Activated B cell treated with CpG ODN at 0.5 μM for 24 hours (primary cell): ENCODE measurements at regions of chr3 and their contacts with region 1.

Region 1: DNA sequence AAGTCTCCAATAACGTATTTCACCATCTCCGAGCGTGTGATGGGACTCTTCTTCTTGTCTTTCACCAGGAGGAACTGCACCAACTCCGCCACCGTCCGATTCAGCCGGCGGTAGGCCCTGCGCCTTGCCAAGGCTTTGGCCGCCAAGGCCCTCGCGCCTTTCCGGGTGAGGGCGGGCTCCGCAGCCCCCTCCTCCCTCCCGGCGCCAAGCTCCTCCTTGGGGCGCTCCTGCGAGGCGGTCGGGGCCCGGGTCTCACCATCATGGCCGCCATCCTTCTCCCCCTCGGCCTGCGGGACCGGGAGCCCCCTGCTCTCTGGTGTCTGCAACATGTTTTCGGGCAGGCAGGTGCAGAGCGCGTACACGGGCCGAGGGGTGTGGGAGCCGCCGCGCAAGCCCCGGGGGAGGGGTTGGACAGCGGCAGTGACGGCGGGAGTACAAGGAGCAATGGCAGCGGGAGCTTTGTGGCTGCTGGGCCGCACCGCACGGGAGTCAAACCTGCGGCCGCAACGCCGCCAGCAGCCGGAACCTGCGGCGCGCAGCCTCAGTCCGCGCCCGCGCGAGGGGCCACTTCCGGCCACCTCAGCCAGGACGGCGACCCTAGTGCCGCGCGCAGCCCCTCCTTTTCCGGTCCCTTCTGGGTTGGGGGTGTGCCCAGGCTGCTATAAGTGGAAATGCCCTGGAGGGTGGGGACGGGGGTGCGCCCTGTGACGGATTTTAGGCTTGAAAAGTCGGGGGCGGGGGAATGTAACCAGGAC is at the start of gene MAGEF1:
- DNase-seq: peak; percentile 65
- ATAC-seq: peak; percentile 80
- H3K4me3 Mint-ChIP-seq: peak within 1 kb of the TSS; percentile 86
- H3K27ac Mint-ChIP-seq: peak within 1 kb of the TSS; percentile 87
- H3K4me1 Mint-ChIP-seq: peaks cover 30% of the 10 kb centered on the region
- H3K27me3 Mint-ChIP-seq: no peaks in the 10 kb centered on the region
- CTCF ChIP-seq: no peak
- total RNA-seq, gene MAGEF1: 18.5 and 18.7 TPM in 2 replicates

Region 2: GRCh38 chr3:184561061-184561912 is 150.4 kb before region 1 on chr3 and contains the start of gene EPHB3:
- CTCF ChIA-PET with region 1: interaction called, 5 read pairs
- POLR2A ChIA-PET with region 1: interaction called, 5 read pairs
- intact Hi-C with region 1: loop called (anchors 1 kb)
- DNase-seq: peak; percentile 89
- ATAC-seq: peak; percentile 93
- H3K4me3 Mint-ChIP-seq: peak within 1 kb of the TSS; percentile 77
- H3K27ac Mint-ChIP-seq: no peak within 1 kb of the TSS
- H3K4me1 Mint-ChIP-seq: peaks cover 15% of the 10 kb centered on the region
- H3K27me3 Mint-ChIP-seq: peaks cover 40% of the 10 kb centered on the region
- CTCF ChIP-seq: peak; percentile 67
- total RNA-seq, gene EPHB3: 0.05 and 0.07 TPM in 2 replicates

Region 3: GRCh38 chr3:184679056-184679816 is 32.4 kb before region 1 on chr3:
- CTCF ChIA-PET with region 1: no interaction called
- POLR2A ChIA-PET with region 1: interaction called, 3 read pairs
- intact Hi-C with region 1: loop called (anchors 1 kb)
- DNase-seq: no peak
- ATAC-seq: no peak
- H3K4me3 Mint-ChIP-seq: no peak overlapping the region
- H3K27ac Mint-ChIP-seq: no peak overlapping the region
- H3K4me1 Mint-ChIP-seq: peaks cover 33% of the 10 kb centered on the region
- H3K27me3 Mint-ChIP-seq: no peaks in the 10 kb centered on the region
- CTCF ChIP-seq: no peak

Region 4: DNA sequence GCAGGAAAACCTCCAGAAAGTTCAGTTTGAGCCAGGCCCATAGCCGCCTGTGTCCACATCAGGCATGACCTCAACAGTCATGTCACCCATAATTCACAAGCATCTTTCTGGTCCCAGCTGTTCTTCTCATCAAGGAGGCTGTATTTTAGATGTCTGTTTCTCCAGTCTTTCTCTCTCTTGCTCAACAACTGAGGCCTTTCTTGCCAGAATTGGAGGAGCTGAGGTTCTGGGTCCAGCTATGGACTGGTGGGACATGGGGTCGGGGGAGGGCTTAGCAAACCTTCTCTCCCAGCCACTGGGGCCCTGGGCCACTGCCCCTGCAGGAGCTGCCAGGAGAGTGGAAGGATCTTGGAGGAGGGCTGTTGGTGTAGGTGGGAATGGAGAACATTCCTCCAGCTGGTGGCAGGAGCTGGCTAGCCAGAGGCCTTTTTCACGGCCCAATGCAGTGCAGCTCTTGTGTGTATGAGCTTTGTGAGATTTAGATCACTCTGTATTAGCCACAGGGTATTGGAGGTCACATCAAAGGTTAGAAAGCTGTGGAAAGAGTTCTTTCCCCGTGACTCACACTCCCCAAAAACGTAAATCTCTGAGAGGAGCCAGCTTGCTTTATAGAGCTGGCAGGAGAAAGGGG is 23.3 kb before region 1 on chr3:
- CTCF ChIA-PET with region 1: no interaction called
- POLR2A ChIA-PET with region 1: interaction called, 9 read pairs
- intact Hi-C with region 1: loop called (anchors 1 kb)
- DNase-seq: no peak
- ATAC-seq: no peak
- H3K4me3 Mint-ChIP-seq: no peak overlapping the region
- H3K27ac Mint-ChIP-seq: no peak overlapping the region
- H3K4me1 Mint-ChIP-seq: peaks cover 52% of the 10 kb centered on the region
- H3K27me3 Mint-ChIP-seq: no peaks in the 10 kb centered on the region
- CTCF ChIP-seq: no peak

Region 5: GRCh38 chr3:184765730-184766074 is 54.0 kb after region 1 on chr3:
- CTCF ChIA-PET with region 1: no interaction called
- POLR2A ChIA-PET with region 1: interaction called, 10 read pairs
- intact Hi-C with region 1: loop called (anchors 2 kb)
- DNase-seq: no peak
- ATAC-seq: peak; percentile 89
- H3K4me3 Mint-ChIP-seq: peak overlapping the region; percentile 8
- H3K27ac Mint-ChIP-seq: peak overlapping the region; percentile 35
- H3K4me1 Mint-ChIP-seq: peaks cover 26% of the 10 kb centered on the region
- H3K27me3 Mint-ChIP-seq: peaks cover 1% of the 10 kb centered on the region
- CTCF ChIP-seq: no peak

Region 6: DNA sequence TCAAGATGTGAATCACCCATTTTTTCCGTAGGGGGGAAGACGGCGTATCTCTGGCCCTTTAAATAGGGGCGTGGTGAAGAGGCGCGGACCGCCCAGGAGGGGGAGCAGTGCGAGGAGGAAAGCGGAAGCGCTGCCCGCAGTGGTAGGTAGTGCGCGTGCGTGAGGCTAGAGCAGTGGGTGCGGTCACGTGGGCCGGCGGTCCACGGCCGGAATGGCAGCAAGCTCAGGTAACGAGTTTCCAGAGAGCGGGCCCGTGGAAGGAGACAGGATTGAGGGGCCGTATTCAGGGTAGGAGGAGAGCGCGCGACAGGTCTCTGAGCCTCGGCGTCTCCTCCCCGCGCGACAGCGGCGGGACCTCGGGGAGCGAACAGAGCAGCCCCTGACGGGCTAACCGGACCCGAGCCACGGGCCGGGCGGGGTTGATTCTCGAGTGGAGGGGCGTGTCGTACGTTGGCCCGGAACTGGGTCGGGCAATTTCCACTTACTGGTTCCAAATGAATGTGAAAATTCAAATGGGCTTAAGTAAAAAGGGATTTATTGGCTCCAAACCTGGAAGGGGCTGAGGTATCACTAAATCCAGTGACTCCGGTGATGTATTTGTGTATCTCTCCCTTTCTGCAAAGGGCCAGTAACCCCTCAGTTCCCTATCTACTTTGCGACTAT is 100.5 kb after region 1 on chr3 and contains the start of gene VPS8:
- CTCF ChIA-PET with region 1: no interaction called
- POLR2A ChIA-PET with region 1: no interaction called
- intact Hi-C with region 1: loop called (anchors 2 kb)
- DNase-seq: peak; percentile 95
- ATAC-seq: peak; percentile 92
- H3K4me3 Mint-ChIP-seq: peak within 1 kb of the TSS; percentile 96
- H3K27ac Mint-ChIP-seq: peak within 1 kb of the TSS; percentile 96
- H3K4me1 Mint-ChIP-seq: peaks cover 24% of the 10 kb centered on the region
- H3K27me3 Mint-ChIP-seq: no peaks in the 10 kb centered on the region
- CTCF ChIP-seq: no peak
- total RNA-seq, gene VPS8: 57.4 and 68.8 TPM in 2 replicates

Region 7: GRCh38 chr3:185152410-185153210 is 440.9 kb after region 1 on chr3 and contains the start of gene C3orf70:
- CTCF ChIA-PET with region 1: no interaction called
- POLR2A ChIA-PET with region 1: no interaction called
- intact Hi-C with region 1: no loop called
- DNase-seq: peak; percentile 19
- ATAC-seq: peak; percentile 49
- H3K4me3 Mint-ChIP-seq: peak within 1 kb of the TSS; percentile 78
- H3K27ac Mint-ChIP-seq: peak within 1 kb of the TSS; percentile 15
- H3K4me1 Mint-ChIP-seq: peaks cover 6% of the 10 kb centered on the region
- H3K27me3 Mint-ChIP-seq: peaks cover 24% of the 10 kb centered on the region
- CTCF ChIP-seq: no peak
- total RNA-seq, gene C3orf70: not detected in 2 replicates